Dorsolateral prefrontal cortex (tissue), 120 donors: ENCODE measurements at regions of chr21 and their contacts with region 1.

Region 1: GRCh38 chr21:42009831-42010523 is at the start of gene ZBTB21:
- DNase-seq: peak; percentile 94 to 98 (median 95)
- H3K4me3 ChIP-seq: peak within 1 kb of the TSS; percentile 67 to 99 (median 90)
- H3K27ac ChIP-seq: peak within 1 kb of the TSS; percentile 88 to 100 (median 99)
- H3K27me3 ChIP-seq: no peaks in the 10 kb centered on the region
- CTCF ChIP-seq: peak in 5 of 56 donors; percentile 4 to 13 (median 6)
- total RNA-seq, gene ZBTB21: 17.2 to 47.7 (median 24.6) TPM

Region 2: DNA sequence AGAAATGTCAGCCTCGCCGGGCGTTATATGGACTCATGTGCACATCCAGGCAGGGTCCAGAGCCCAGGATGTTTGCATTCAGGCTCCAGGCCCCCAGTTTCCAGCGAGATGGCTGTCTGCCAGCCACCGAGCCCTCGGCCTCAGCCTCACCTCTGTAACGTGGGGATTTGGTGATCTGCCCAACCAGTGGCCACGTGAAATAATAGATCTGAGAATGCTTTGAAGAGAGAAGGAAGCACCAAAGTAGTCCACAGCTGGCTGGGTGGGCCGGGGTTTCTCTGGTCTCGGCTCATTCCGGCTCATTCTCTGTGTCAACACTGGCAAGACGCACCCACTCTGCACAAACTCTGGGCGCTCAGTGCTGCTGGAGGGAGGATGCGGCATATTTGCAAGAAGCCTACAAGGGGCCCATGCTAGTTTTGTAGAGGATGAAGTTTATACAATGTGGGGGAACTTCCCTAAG is 473.3 kb before region 1 on chr21:
- intact Hi-C with region 1: no loop called
- DNase-seq: no peak
- H3K4me3 ChIP-seq: no peak overlapping the region
- H3K27ac ChIP-seq: no peak overlapping the region
- H3K27me3 ChIP-seq: peaks cover 0 to 30% (median 0%) of the 10 kb centered on the region in 45 donors
- CTCF ChIP-seq: no peak

Region 3: DNA sequence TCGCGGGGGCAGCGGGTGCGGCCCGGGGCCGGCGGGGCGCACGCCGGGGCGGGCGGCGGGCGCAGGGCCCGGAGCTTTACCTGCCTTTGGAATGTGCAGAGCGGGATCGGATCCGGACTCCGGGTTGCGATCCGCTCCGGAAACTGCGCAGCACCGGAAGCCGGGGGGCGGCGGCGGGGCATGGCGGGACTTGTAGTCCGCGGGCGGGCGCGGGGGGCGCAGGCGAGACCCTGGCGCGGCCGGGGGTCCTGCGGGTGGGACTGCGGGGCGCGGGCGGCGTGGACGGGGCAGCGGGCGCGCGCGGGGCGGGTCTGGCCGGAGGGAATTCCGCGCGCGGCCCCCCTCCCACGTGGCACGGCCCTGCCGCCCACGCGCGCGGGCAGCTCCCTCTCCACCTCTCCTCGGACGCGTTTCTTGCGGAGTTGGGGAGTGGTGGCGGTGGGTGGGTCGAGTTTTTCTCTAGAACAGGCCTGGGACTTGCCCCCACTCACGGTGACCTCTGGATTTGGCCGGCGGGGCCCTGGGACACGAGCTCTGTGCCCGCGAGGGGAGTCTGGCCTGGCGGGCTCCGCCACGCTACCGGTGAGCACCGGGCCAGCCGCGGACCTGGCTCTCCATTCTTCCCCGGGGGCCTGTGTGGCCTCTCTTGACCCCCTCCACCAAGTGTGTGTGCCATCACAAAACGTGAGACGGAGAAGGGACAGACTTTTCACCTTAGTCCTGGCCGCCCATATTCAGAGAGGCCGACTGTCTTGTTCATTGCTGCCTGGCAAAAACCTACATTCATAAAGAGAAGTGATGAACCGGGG is 130.6 kb before region 1 on chr21 and contains the start of gene PRDM15:
- intact Hi-C with region 1: loop called (anchors 1 to 5 kb)
- DNase-seq: peak; percentile 69 to 88 (median 78)
- H3K4me3 ChIP-seq: peak within 1 kb of the TSS; percentile 60 to 95 (median 83)
- H3K27ac ChIP-seq: peak within 1 kb of the TSS in 55 of 59 donors; percentile 32 to 92 (median 80)
- H3K27me3 ChIP-seq: no peaks in the 10 kb centered on the region
- CTCF ChIP-seq: peak in 1 of 56 donors; percentile 4
- total RNA-seq, gene PRDM15: 6.7 to 20.0 (median 11.0) TPM

Region 4: DNA sequence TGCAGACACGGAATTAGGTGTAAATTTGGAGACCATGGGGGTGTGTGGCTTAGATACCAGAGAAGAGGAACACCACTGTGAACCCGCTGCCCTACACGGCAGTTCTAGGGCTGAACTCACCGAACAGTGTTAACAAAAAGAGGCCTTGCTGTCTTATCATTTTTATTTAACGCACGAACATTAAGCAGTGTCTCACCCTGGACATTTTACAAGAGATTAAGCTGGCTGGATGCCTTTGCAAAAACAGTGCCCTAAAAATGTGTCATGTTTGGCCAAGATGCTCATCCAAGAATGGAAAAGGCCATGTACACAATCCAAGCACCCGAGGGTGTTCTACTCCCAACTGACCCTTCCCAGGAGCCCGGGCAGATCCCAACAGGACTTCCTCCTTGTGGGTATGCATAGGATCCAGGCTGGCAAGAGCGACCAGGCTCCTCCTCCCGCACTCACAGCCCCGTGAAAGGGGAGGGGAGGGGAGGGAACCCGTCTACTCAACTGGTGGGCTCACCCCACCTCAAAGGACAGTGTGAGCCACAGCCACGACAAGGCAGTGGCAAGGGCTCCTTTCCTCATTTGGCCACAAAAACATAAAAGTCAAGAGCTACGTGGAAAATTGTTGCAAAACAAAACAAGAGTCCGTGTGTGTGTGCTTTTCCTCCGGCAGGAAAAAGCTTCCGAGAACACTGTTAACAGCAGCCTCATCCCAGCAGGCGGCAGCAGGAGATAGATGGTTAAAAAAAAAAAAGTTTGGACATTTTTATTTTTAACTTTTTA is 76.5 kb before region 1 on chr21:
- intact Hi-C with region 1: loop called in 1 of 2 experiments (anchors 5 kb)
- DNase-seq: peak in 3 of 10 donors; percentile 5 to 38 (median 27)
- H3K4me3 ChIP-seq: peak overlapping the region in 5 of 59 donors; percentile 2 to 13 (median 6)
- H3K27ac ChIP-seq: peak overlapping the region in 25 of 59 donors; percentile 11 to 64 (median 35)
- H3K27me3 ChIP-seq: no peaks in the 10 kb centered on the region
- CTCF ChIP-seq: peak in 9 of 56 donors; percentile 8 to 18 (median 14)

Region 5: DNA sequence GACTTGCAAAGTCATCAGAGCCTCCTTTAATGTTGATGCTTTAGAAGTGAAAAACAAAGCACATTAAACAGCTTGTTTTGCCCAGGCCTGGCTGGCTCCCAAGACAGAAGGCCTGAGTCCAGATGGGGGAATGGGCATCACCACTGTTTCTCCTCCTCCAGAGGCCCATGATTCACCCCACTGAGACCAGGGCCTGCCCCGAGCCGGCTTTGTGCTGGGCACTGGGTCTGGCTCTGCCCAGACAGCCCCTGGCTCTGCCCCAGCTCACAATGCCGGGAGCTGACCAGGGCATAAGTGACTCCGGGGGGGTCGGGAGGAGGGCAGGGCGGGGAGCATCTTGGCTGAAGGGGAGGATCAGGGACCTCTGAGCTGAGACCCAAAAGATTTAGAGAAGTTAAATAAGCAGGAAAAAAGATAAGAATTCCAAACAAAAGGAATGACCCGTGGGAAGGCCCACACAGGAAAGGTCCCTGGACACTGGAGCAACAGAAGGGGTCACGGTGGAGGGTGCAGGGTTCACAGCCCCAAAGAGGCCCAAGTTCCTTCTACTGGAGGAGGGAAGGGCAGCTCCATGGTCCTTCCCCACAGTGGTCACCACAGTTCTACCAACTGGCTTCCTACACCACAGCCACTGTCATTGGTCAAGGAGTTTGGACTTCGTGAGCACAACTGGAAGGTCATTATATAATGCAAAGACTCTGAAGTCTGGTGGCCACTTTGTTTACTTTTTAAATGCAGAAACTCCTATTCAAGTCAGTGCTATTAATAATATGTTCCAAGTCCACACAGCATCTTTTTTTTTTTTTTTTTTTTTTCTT is 61.7 kb before region 1 on chr21:
- intact Hi-C with region 1: loop called (anchors 2 kb)
- DNase-seq: peak; percentile 27 to 89 (median 83)
- H3K4me3 ChIP-seq: peak overlapping the region in 32 of 59 donors; percentile 2 to 44 (median 17)
- H3K27ac ChIP-seq: peak overlapping the region; percentile 22 to 95 (median 83)
- H3K27me3 ChIP-seq: no peaks in the 10 kb centered on the region
- CTCF ChIP-seq: peak in 1 of 56 donors; percentile 7